ENCODE measurements at regions of chr9 and their contacts with region 1.

Region 1: GRCh38 chr9:33466565-33467495 is 6.9 kb downstream of the NOL6 start:
- DNase-seq: peak; percentile 65
- H3K27ac ChIP-seq: peak overlapping the region; percentile 61
- CTCF ChIP-seq: peak; percentile 100

Region 2: GRCh38 chr9:33374634-33375213 is 92.1 kb before region 1 on chr9:
- CTCF ChIA-PET with region 1: interaction called, 33 read pairs
- POLR2A ChIA-PET with region 1: no interaction called
- DNase-seq: peak; percentile 86
- H3K27ac ChIP-seq: peak overlapping the region; percentile 50; the same call in 1 of the 2 replicates
- CTCF ChIP-seq: peak; percentile 98

Region 3: GRCh38 chr9:33415501-33416038 is 51.3 kb before region 1 on chr9:
- CTCF ChIA-PET with region 1: interaction called, 11 read pairs
- POLR2A ChIA-PET with region 1: no interaction called
- DNase-seq: peak; percentile 53
- H3K27ac ChIP-seq: peak overlapping the region; percentile 70
- CTCF ChIP-seq: no peak; the same call in 1 of the 2 replicates

Region 4: GRCh38 chr9:33452828-33453271 is 14.0 kb before region 1 on chr9:
- CTCF ChIA-PET with region 1: interaction called, 15 read pairs
- POLR2A ChIA-PET with region 1: no interaction called
- DNase-seq: peak; percentile 96
- H3K27ac ChIP-seq: peak overlapping the region; percentile 76
- CTCF ChIP-seq: peak; percentile 80

Measured in RWPE1 (cell line).